Posterior cingulate gyrus (tissue), 11 donors: ENCODE measurements at regions of chrX and their contacts with region 1.

Region 1: GRCh38 chrX:15973299-15973698 is 118.7 kb upstream of the AP1S2 start:
- DNase-seq: peak in 5 of 10 donors; percentile 26 to 86 (median 28)

Region 2: DNA sequence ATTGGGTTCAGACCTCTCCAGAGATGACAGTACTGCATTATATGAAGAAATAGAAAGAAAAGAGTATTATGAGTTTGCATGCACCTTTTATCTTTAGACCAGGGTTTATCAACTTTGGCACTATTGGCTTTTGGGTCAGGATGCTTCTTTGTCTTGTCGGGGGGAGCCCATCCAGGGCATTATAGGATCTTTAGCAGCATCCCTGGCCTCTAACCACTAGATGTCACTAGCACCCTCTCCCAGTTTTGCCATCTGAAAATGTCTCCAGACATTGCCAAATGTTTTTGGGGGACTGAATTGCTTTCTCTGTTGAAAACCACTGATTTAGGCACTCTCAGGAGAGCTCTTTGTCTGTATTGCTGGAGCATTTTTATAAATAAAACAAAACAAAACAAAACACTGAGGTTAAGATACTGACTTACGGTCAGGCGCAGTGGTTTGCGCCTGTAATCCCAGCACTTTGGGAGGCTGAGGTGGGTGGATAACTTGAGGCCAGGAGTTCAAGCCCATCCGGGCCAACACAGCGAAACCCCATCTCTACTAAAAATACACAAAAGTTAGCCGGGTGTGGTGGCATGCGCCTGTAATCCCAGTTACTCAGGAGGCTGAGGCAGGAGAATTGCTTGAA is 211.6 kb before region 1 on chrX:
- intact Hi-C with region 1: loop called (anchors 5 kb)
- DNase-seq: peak in 3 of 10 donors; percentile 6 to 23 (median 8)

Region 3: GRCh38 chrX:16931371-16931770 is 958.1 kb after region 1 on chrX:
- intact Hi-C with region 1: no loop called
- DNase-seq: no peak